ENCODE measurements at regions of chr1 and their contacts with region 1.

Region 1: DNA sequence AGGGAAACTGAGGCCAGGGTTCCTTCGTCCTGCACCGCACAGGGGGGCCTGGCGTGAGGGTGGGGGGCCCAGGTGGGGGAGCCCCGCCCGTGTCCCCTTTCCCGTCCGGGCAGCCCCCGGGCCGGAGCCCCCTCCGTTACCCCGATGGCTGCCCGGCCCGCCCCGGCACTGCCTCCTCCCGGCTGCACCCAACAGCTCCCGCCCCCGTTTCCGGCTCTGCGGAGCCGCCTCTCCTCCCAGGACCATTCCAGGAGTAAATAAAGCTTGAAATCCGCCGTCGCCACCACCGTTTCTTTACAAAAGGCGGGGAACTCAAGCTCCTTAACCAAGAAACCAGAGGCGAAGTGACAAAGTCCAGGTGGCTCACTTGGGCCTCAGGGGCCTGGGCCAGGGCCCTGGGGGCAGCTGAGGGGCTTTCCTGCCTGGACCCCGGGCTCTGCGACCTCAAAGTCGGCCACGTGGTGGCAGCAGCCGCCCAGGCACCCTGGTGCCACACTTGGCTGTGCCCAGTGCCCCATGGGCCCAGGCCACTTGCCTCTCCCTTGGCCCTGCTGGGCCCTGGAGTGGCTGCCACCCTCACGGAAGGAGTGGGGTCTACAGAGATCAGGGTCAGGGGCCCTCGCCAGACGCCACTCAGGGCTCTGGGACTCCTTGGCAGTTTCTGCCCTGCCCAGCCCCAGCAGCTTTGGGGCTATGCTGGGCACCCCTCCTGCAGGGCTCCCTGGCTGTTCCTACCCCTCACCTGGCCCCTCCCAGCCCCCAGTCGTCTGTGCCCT is 514 bp upstream of the FAAP20 start:
- DNase-seq: peak; percentile 73
- H3K4me3 ChIP-seq: peak overlapping the region; percentile 41 to 89 (median 77)
- H3K27ac ChIP-seq: peak overlapping the region; percentile 82 to 97 (median 94)
- H3K4me1 ChIP-seq: peaks cover 45 to 77% (median 59%) of the 10 kb centered on the region in 3 donors
- H3K27me3 ChIP-seq: no peaks in the 10 kb centered on the region
- CTCF ChIP-seq: peak; percentile 80 to 99 (median 93)
- POLR2A ChIP-seq: no peak

Region 2: GRCh38 chr1:1929639-1930471 is 265.2 kb before region 1 on chr1:
- intact Hi-C with region 1: no loop called
- DNase-seq: no peak
- H3K4me3 ChIP-seq: no peak overlapping the region
- H3K27ac ChIP-seq: no peak overlapping the region
- H3K4me1 ChIP-seq: peaks cover 0 to 15% (median 0%) of the 10 kb centered on the region in 3 donors
- H3K27me3 ChIP-seq: peaks cover 0 to 13% (median 0%) of the 10 kb centered on the region in 4 donors
- CTCF ChIP-seq: no peak
- POLR2A ChIP-seq: no peak

Region 3: GRCh38 chr1:2314803-2315673 is 120.0 kb after region 1 on chr1:
- intact Hi-C with region 1: loop called (anchors 10 kb)
- DNase-seq: no peak
- H3K4me3 ChIP-seq: peak overlapping the region; percentile 43 to 76 (median 62)
- H3K27ac ChIP-seq: peak overlapping the region; percentile 62 to 92 (median 84)
- H3K4me1 ChIP-seq: peaks cover 34 to 95% (median 49%) of the 10 kb centered on the region in 3 donors
- H3K27me3 ChIP-seq: peaks cover 0 to 12% (median 0%) of the 10 kb centered on the region in 4 donors
- CTCF ChIP-seq: peak; percentile 67 to 99 (median 74)
- POLR2A ChIP-seq: no peak

Region 4: DNA sequence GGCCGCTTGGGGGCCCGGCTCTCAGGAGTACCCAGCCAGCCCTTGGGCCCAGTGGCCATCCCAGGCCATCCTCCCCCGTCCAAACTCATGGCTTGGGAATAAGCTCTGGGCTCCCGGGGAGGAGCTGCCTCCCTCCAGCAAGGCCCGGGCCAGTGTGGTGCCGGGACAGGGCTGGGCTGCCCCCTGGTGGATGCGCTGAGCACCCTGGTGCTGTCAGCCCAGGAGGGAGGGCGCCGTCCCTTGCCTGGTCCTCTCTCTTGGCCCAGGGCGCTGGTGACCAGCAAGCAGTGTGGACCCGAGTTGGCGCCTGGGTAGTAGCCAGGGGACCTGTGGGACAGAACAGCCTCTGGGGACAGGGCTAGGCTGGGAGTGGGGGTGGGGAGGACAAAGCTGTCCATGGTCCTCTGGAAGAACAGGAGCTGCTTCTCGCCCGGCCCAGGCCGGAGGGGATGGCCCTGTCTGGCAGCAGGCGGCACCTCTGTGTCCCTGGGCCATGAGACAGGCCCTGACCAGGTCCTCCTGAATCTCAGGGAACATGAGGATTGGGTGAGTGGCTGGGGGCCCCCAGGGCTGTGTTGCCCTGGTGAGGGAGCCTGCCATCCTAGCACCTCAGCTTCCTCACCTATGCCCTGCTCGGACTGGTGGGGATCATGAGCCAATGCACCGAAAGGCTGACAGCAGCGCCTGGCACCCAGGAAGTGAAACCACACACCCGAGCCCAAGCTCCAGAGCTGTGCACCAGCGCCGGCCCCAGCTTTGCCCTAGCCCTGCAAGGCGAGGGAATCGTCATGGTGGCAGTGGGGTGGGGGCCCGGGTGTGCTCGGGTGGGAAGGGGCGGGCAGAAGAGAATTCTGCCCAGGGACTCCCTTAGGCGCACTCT is 186.9 kb after region 1 on chr1:
- intact Hi-C with region 1: loop called (anchors 2 kb)
- DNase-seq: no peak
- H3K4me3 ChIP-seq: no peak overlapping the region
- H3K27ac ChIP-seq: peak overlapping the region in 1 of 4 donors; percentile 5
- H3K4me1 ChIP-seq: peaks cover 0 to 15% (median 9%) of the 10 kb centered on the region in 3 donors
- H3K27me3 ChIP-seq: no peaks in the 10 kb centered on the region
- CTCF ChIP-seq: peak; percentile 89 to 98 (median 96)
- POLR2A ChIP-seq: no peak

Region 5: GRCh38 chr1:2545759-2546514 is 350.9 kb after region 1 on chr1:
- intact Hi-C with region 1: loop called (anchors 10 kb)
- DNase-seq: peak; percentile 73
- H3K4me3 ChIP-seq: peak overlapping the region; percentile 36 to 78 (median 57)
- H3K27ac ChIP-seq: peak overlapping the region; percentile 89 to 98 (median 97)
- H3K4me1 ChIP-seq: peaks cover 56 to 90% (median 57%) of the 10 kb centered on the region in 3 donors
- H3K27me3 ChIP-seq: peaks cover 0 to 18% (median 0%) of the 10 kb centered on the region in 4 donors
- CTCF ChIP-seq: no peak
- POLR2A ChIP-seq: peak in 1 of 4 donors; percentile 76